Calu3 (cell line): ENCODE measurements at regions of chr2 and their contacts with region 1.

Region 1: GRCh38 chr2:131154071-131154531 is 49.0 kb downstream of the PLEKHB2 start:
- DNase-seq: peak; percentile 73
- H3K4me3 Mint-ChIP-seq: no peak overlapping the region
- H3K27ac Mint-ChIP-seq: peak overlapping the region; percentile 37
- H3K4me1 Mint-ChIP-seq: peaks cover 8% of the 10 kb centered on the region
- H3K27me3 Mint-ChIP-seq: peaks cover 13% of the 10 kb centered on the region
- CTCF ChIP-seq: peak; percentile 68

Region 2: GRCh38 chr2:131413148-131413747 is 259.1 kb after region 1 on chr2:
- CTCF ChIA-PET with region 1: no interaction called
- intact Hi-C with region 1: loop called (anchors 10 kb)
- DNase-seq: peak; percentile 37
- H3K4me3 Mint-ChIP-seq: no peak overlapping the region
- H3K27ac Mint-ChIP-seq: no peak overlapping the region
- H3K4me1 Mint-ChIP-seq: no peaks in the 10 kb centered on the region
- H3K27me3 Mint-ChIP-seq: peaks cover 72% of the 10 kb centered on the region
- CTCF ChIP-seq: peak; percentile 57

Region 3: DNA sequence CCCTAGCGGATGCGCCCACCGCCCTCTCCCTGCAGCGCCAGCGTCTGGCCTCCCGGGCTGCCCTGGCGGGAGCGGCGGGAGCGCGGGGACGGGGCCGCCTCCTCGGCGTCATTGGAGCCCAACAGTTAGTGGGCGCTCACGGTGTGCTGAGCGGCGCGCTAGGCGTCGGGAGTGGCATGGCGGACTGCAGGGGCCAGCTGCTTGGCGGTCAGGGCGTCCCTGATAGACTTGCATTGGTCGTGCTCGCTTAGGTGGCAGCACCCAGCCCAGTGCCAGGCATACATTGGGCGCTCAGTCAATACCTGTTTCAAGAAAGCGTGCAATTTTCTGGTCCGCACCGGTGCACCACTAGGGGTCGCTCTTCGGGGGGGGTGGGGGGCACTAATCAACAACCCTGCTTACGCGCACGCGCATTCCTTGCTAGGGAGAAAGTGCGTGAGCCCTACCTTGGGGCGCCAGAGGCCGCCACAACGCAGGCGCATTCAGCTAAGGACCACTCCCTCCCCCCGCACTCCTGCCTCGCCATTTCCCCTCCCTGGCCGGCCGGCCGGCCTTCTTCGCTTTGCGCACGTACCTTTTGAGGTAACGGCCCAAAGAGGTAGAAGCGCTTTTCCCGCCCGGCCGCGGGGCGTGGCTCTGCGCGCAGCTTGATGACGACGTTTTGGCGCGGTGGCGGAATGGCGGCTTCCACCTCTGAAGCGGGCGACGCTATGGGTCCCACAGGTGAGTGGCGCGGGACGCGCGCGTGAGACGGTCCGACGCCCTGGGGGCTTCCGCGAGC is 338.5 kb after region 1 on chr2:
- CTCF ChIA-PET with region 1: interaction called, 3 read pairs
- intact Hi-C with region 1: loop called (anchors 10 kb)
- DNase-seq: peak; percentile 95
- H3K4me3 Mint-ChIP-seq: peak overlapping the region; percentile 95
- H3K27ac Mint-ChIP-seq: peak overlapping the region; percentile 94
- H3K4me1 Mint-ChIP-seq: peaks cover 17% of the 10 kb centered on the region
- H3K27me3 Mint-ChIP-seq: no peaks in the 10 kb centered on the region
- CTCF ChIP-seq: peak; percentile 80

Region 4: GRCh38 chr2:131673392-131674173 is 519.5 kb after region 1 on chr2:
- CTCF ChIA-PET with region 1: interaction called, 12 read pairs
- intact Hi-C with region 1: loop called (anchors 1 kb)
- DNase-seq: peak; percentile 89
- H3K4me3 Mint-ChIP-seq: peak overlapping the region; percentile 65
- H3K27ac Mint-ChIP-seq: no peak overlapping the region
- H3K4me1 Mint-ChIP-seq: no peaks in the 10 kb centered on the region
- H3K27me3 Mint-ChIP-seq: no peaks in the 10 kb centered on the region
- CTCF ChIP-seq: peak; percentile 86

Region 5: DNA sequence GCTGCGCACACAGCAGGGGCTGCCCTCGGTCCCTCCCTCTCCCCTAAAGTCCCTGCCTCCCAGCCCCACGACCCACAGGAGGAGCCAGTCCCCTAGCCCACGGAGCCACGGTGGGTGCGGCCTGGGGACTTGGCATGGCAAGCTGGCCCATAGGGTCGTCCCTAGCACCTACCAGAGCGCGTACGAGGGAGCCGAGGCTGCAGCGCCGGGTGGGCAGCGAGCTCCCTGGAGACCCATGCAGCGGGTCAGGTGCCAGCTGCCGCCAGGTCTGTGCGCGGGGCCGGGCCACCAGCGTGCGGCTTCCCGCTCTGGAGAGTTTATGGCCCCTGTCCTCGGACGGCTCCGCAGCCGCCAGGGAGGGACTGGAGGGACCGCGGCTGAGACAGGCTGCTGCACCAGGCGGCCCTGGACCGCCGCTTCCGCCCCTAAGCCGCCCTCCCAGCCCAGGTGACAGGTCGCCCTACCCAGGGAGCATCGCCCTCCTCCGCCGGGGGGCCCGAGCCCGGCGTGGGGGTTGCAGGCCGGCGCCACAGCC is 647.2 kb after region 1 on chr2:
- CTCF ChIA-PET with region 1: interaction called, 5 read pairs
- intact Hi-C with region 1: loop called (anchors 10 kb)
- DNase-seq: no peak
- H3K4me3 Mint-ChIP-seq: no peak overlapping the region
- H3K27ac Mint-ChIP-seq: no peak overlapping the region
- H3K4me1 Mint-ChIP-seq: no peaks in the 10 kb centered on the region
- H3K27me3 Mint-ChIP-seq: no peaks in the 10 kb centered on the region
- CTCF ChIP-seq: no peak